Left ventricle myocardium inferior (tissue), 1 donor: ENCODE measurements at regions of chr9 and their contacts with region 1.

Region 1: DNA sequence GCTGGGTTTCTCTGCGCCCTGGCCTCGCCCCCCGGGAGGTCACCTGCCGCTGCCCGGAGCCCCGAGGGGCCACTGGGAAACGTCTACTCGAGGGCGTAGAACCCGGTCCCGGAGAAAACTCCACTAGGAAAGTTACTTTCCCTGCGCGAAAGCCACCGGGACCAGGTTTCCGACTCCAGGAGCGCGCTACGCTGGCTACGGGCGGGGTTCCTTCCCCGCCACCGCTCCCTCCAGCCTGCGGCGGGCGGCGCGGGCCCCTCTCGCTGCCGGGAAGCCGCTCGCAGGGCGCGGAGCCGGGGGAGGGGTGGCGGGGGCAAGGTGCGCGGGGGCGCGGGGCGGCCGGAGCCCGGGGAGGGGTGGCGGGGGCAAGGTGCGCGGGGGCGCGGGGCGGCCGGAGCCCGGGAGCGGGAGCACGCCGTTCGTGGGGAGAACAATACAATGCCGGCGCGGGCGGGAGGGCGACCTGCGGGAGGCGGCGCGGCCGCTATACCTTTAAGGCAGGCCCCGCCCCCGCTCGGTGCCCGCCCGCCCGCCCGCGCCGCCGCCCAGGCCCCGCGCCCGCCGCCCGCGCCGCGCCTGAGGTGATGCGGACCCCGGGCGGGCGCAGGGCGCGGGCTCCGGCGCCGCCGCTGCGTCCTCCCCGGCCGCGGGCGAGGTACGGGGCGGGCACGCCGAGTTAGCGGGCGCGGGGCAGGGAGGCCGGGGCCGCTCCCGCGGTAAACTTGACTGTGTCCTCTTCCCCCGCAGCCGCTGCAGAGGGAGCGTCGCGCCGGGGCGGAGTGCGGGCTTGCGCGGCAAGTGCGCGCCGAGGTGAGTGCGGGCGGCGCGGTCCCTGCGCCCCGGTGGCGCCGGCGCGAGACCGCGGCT is 278.1 kb downstream of the AOPEP start:
- DNase-seq: peak; percentile 68
- H3K4me3 ChIP-seq: peak overlapping the region; percentile 85
- H3K27ac ChIP-seq: peak overlapping the region; percentile 99
- H3K4me1 ChIP-seq: peaks cover 84% of the 10 kb centered on the region
- H3K27me3 ChIP-seq: no peaks in the 10 kb centered on the region
- CTCF ChIP-seq: no peak

Region 2: DNA sequence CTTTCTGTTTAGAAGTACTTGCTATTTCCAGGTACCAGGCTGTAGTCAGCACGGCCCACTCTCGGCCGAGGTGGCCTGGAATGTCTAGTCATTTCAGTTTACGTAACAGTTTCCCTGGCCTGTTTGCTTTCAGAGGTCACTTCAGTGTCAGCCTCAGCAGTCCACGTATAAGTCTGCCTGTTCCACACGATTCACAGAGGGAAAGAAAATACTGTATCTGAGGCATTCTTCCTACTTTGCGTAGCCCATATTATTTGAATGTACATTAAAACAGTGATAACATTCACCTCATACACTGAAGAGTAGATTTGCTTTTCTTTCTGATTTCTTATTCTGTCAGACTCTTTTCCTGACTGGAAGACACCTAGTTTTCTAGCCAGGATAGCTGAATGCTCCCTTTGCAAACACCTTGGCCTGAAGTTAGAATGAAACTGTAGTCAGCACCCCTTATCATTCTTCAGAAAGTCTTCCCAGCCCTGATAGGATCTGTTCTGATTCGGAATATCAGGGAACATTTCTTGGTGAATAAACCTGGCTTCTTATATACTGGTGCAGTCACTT is 137.3 kb before region 1 on chr9:
- intact Hi-C with region 1: loop called (anchors 5 kb)
- DNase-seq: peak; percentile 62
- H3K4me3 ChIP-seq: peak overlapping the region; percentile 37
- H3K27ac ChIP-seq: peak overlapping the region; percentile 94
- H3K4me1 ChIP-seq: peaks cover 84% of the 10 kb centered on the region
- H3K27me3 ChIP-seq: no peaks in the 10 kb centered on the region
- CTCF ChIP-seq: no peak

Region 3: GRCh38 chr9:94922098-94922607 is 82.5 kb before region 1 on chr9:
- intact Hi-C with region 1: no loop called
- DNase-seq: no peak
- H3K4me3 ChIP-seq: no peak overlapping the region
- H3K27ac ChIP-seq: peak overlapping the region; percentile 82
- H3K4me1 ChIP-seq: peaks cover 51% of the 10 kb centered on the region
- H3K27me3 ChIP-seq: no peaks in the 10 kb centered on the region
- CTCF ChIP-seq: no peak

Region 4: GRCh38 chr9:94937214-94937903 is 67.3 kb before region 1 on chr9:
- intact Hi-C with region 1: no loop called
- DNase-seq: no peak
- H3K4me3 ChIP-seq: no peak overlapping the region
- H3K27ac ChIP-seq: no peak overlapping the region
- H3K4me1 ChIP-seq: peaks cover 45% of the 10 kb centered on the region
- H3K27me3 ChIP-seq: no peaks in the 10 kb centered on the region
- CTCF ChIP-seq: no peak

Region 5: DNA sequence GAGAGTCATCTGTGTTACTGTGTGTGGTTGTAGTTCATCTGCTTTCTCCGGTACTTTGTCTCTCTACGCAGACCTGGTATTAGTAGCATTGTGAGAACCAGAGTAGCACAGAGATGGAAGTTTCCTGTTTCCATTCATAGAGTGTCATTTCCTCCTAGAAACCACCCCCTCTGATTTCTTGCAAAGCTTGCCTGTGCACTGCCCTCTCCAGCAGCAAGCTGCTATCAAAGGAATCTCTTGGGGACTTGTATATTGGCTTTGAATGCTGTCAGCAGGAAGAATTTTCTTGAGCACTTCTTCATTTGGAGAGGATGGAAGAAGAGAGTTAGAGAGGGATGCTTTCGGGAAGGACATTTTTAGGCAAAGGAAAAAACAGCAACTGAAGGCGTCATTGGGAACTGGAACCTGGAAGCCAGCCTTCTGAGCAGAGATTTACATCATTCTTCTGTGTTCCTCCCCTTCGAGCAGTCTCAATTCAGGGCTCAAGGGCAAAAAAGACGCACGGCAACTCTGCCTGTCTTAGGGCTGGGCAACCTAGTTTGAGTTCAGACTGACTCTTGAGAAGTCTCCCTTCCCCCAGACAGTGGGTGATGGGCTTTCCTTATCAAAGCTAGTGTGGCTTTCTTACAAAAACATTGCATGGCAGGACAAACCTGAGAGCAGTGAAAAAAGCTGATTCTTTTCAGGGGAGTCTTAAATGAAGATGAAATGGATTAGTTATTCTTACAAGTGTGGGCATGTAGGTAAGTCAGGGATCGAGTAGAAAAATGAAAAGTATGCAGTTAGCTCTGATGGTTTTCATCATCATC is 51.9 kb before region 1 on chr9:
- intact Hi-C with region 1: no loop called
- DNase-seq: no peak
- H3K4me3 ChIP-seq: peak overlapping the region; percentile 9
- H3K27ac ChIP-seq: peak overlapping the region; percentile 82
- H3K4me1 ChIP-seq: peaks cover 57% of the 10 kb centered on the region
- H3K27me3 ChIP-seq: no peaks in the 10 kb centered on the region
- CTCF ChIP-seq: no peak

Region 6: DNA sequence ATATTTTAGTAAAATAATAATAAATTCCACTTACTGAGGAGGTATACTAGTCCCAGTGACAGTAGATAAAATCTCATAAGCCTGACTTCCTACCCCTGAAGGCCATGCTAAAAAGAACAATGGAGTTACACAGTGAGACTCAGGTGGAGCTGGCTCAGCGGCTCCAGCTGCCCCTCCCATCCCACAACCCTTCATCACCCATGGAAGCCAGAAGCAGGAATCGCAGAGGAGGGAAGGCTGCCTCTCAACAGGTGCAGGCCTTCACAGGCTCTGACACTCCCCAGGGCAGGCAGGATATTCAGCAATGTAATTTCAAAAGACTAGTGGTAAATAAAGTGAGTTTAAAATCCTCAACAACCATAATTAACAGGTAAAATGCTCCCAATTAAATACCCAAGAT is 245.3 kb after region 1 on chr9:
- intact Hi-C with region 1: no loop called
- DNase-seq: no peak
- H3K4me3 ChIP-seq: no peak overlapping the region
- H3K27ac ChIP-seq: no peak overlapping the region
- H3K4me1 ChIP-seq: peaks cover 13% of the 10 kb centered on the region
- H3K27me3 ChIP-seq: no peaks in the 10 kb centered on the region
- CTCF ChIP-seq: no peak